Activated B cell treated with CpG ODN at 0.5 μM for 24 hours (primary cell): ENCODE measurements at regions of chr5 and their contacts with region 1.

Region 1: DNA sequence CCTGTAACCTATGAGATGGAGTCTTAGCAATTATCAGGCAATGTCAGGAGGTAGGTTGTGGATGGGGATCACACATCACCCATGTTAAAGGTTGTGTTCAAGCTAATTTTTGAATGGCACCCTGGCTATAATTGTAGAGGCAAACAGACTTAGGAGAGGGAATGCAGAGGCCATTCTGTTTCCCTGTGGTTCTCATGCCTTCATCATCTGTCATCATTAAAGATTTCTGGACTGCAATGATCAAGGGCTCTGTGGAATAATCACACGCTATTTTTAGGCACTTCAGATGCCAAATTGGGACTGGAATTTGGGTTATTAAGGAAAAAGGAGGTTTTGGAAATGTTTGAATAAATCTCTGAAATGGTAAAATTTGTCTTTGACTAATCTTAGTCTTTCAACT is 1065.4 kb downstream of the TAF11L14 start:
- DNase-seq: no peak
- ATAC-seq: no peak
- H3K4me3 Mint-ChIP-seq: no peak overlapping the region
- H3K27ac Mint-ChIP-seq: no peak overlapping the region
- H3K4me1 Mint-ChIP-seq: peaks cover 31% of the 10 kb centered on the region
- H3K27me3 Mint-ChIP-seq: no peaks in the 10 kb centered on the region
- CTCF ChIP-seq: no peak

Region 2: GRCh38 chr5:17255471-17256021 is 1444.1 kb before region 1 on chr5:
- CTCF ChIA-PET with region 1: no interaction called
- POLR2A ChIA-PET with region 1: no interaction called
- intact Hi-C with region 1: loop called (anchors 10 kb)
- DNase-seq: no peak
- ATAC-seq: peak; percentile 43
- H3K4me3 Mint-ChIP-seq: peak overlapping the region; percentile 44
- H3K27ac Mint-ChIP-seq: peak overlapping the region; percentile 95
- H3K4me1 Mint-ChIP-seq: peaks cover 93% of the 10 kb centered on the region
- H3K27me3 Mint-ChIP-seq: no peaks in the 10 kb centered on the region
- CTCF ChIP-seq: no peak

Region 3: DNA sequence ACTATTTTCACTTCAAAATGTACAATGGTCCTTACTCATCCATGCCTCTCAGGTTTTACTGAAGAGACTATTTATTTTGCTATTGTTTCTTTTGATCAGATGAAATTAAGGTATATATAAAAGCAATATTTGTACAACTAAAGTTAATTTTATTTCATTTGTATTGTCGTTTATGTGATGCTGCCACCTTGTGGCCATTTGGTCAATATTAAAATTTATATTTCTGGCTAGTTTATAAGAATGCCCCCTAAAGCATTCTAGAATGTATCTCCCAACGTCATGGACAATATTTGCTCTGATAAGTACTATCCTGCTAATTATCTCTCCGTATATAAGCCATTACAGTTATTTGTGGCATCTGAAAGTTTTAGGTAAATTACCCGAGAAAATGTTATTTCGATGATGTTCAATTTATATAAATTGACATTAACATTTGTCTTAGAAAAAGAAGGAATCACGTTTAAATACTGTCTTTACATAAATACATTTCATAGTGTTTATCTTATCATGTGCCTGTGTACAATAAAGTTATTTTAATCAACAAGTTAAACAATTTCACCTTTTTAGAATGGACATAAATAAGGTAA is 385.4 kb before region 1 on chr5:
- CTCF ChIA-PET with region 1: no interaction called
- POLR2A ChIA-PET with region 1: no interaction called
- intact Hi-C with region 1: loop called (anchors 5 kb)
- DNase-seq: no peak
- ATAC-seq: no peak
- H3K4me3 Mint-ChIP-seq: no peak overlapping the region
- H3K27ac Mint-ChIP-seq: no peak overlapping the region
- H3K4me1 Mint-ChIP-seq: no peaks in the 10 kb centered on the region
- H3K27me3 Mint-ChIP-seq: no peaks in the 10 kb centered on the region
- CTCF ChIP-seq: no peak

Region 4: GRCh38 chr5:18465833-18466591 is 233.7 kb before region 1 on chr5:
- CTCF ChIA-PET with region 1: interaction called, 27 read pairs
- POLR2A ChIA-PET with region 1: no interaction called
- intact Hi-C with region 1: loop called (anchors 1 kb)
- DNase-seq: no peak
- ATAC-seq: peak; percentile 65
- H3K4me3 Mint-ChIP-seq: no peak overlapping the region
- H3K27ac Mint-ChIP-seq: no peak overlapping the region
- H3K4me1 Mint-ChIP-seq: no peaks in the 10 kb centered on the region
- H3K27me3 Mint-ChIP-seq: no peaks in the 10 kb centered on the region
- CTCF ChIP-seq: peak; percentile 89

Region 5: GRCh38 chr5:18745646-18746615 is 46.2 kb after region 1 on chr5:
- CTCF ChIA-PET with region 1: interaction called, 7 read pairs
- POLR2A ChIA-PET with region 1: interaction called, 13 read pairs
- intact Hi-C with region 1: loop called (anchors 1 kb)
- DNase-seq: no peak
- ATAC-seq: peak; percentile 79
- H3K4me3 Mint-ChIP-seq: peak overlapping the region; percentile 94
- H3K27ac Mint-ChIP-seq: peak overlapping the region; percentile 95
- H3K4me1 Mint-ChIP-seq: peaks cover 60% of the 10 kb centered on the region
- H3K27me3 Mint-ChIP-seq: no peaks in the 10 kb centered on the region
- CTCF ChIP-seq: no peak